ENCODE measurements at regions of chr2 and their contacts with region 1.

Region 1: GRCh38 chr2:231612179-231613053 is 19.8 kb downstream of the TEX44 start:
- DNase-seq: peak; percentile 93 to 97 (median 96)
- ATAC-seq: peak; percentile 71 to 74
- H3K4me3 ChIP-seq: no peak overlapping the region
- H3K27ac ChIP-seq: peak overlapping the region; percentile 99
- H3K4me1 ChIP-seq: peaks cover 4% of the 10 kb centered on the region
- H3K27me3 ChIP-seq: no peaks in the 10 kb centered on the region

Region 2: GRCh38 chr2:231514103-231514950 is 98.1 kb before region 1 on chr2:
- intact Hi-C with region 1: no loop called
- DNase-seq: peak; percentile 98 to 100 (median 99)
- ATAC-seq: peak; percentile 100
- H3K4me3 ChIP-seq: peak overlapping the region; percentile 49
- H3K27ac ChIP-seq: peak overlapping the region; percentile 82
- H3K4me1 ChIP-seq: no peaks in the 10 kb centered on the region
- H3K27me3 ChIP-seq: no peaks in the 10 kb centered on the region

Region 3: DNA sequence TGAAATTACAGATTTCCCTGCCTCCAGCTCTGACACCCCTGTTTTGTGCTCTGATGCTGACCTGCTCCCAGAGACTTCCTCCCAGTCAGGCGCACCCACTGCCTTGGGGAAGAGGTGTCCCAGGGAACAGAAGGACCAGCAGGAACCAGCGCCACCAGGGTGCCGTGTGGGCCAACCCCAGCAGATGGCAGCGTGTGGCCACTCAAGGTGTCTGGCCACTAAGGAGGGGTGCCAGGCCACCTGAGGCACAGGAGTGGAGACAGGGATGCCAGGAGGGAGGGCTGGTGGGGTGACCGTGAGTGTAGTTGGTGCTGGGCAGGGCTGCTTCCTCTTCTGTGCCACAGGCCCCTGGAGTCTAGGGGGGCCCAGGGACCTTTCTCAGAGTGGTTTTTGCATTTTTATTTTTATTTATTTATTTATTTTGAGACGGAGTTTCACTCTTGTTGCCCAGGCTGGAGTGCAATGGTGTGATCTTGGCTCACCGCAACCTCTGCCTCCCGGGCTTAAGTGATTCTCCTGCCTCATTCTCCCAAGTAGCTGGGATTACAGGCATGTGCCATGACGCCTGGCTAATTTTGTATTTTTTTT is 36.3 kb after region 1 on chr2:
- intact Hi-C with region 1: loop called in 1 of 4 experiments (anchors 5 kb)
- DNase-seq: peak; percentile 61 to 83 (median 83)
- ATAC-seq: peak; percentile 75 to 79
- H3K4me3 ChIP-seq: no peak overlapping the region
- H3K27ac ChIP-seq: no peak overlapping the region
- H3K4me1 ChIP-seq: peaks cover 5% of the 10 kb centered on the region
- H3K27me3 ChIP-seq: no peaks in the 10 kb centered on the region

Region 4: DNA sequence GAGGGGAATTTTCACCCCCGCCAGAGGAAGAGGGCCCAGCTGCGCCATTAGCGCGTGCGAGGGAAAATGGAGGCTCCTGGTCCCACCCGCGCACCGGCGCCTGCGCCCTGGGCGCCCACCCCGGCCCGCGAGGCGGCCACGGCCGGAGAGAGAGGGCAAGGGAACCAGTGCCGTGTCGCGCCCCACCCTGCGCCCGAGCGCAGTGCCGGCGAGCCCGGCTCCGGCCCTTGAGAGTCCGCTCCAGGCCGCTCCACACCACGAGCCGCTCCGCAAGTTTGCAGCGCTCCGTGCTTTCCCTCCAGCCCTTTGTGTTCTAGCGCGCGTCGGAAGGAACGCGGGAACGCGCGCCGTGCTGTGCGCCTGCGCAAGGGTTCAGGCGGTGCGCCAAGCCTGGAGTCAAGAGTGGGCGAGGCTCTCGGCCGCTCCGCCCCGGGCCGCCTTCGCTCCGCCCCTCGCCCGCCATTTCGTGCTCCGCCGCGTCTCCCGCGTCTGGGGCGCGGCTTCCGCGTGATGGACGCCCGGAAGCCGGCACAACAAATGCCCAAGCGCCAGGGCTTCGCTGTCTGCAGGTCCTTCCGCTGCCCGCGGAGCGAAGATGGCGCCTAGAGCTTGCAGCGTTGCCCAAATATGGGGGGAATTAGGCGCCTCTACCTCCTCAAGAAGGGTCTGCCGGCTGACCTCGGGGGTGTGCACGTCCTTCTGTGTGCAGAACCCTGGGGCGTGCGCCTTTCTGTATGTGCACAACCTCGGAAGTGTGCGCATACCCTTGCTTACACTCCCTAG is 49.8 kb after region 1 on chr2:
- intact Hi-C with region 1: loop called in 1 of 4 experiments (anchors 2 kb)
- DNase-seq: peak; percentile 96 to 99 (median 98)
- ATAC-seq: peak; percentile 82
- H3K4me3 ChIP-seq: peak overlapping the region; percentile 26
- H3K27ac ChIP-seq: peak overlapping the region; percentile 77
- H3K4me1 ChIP-seq: peaks cover 5% of the 10 kb centered on the region
- H3K27me3 ChIP-seq: no peaks in the 10 kb centered on the region

Region 5: DNA sequence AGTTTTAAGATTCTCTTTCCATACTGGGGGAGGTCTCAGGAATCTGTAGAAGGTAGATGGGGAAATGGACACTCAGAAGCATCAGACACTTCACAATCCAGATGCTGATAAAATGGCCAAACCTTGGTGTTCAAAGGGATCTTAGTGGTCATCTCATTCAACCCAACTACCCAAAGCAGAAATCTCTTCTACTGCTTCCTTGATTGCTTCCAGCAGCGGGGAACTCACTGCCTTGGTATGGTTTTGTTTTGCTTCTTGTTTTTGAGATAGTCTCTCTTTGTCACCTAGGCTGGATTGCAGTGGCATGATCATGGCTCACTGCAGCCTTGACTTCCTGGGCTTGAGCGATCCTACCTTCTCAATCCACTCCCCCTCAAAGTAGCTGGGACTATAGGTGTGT is 56.6 kb after region 1 on chr2:
- intact Hi-C with region 1: loop called (anchors 1 to 5 kb)
- DNase-seq: no peak
- ATAC-seq: no peak
- H3K4me3 ChIP-seq: no peak overlapping the region
- H3K27ac ChIP-seq: no peak overlapping the region
- H3K4me1 ChIP-seq: peaks cover 5% of the 10 kb centered on the region
- H3K27me3 ChIP-seq: no peaks in the 10 kb centered on the region

Region 6: DNA sequence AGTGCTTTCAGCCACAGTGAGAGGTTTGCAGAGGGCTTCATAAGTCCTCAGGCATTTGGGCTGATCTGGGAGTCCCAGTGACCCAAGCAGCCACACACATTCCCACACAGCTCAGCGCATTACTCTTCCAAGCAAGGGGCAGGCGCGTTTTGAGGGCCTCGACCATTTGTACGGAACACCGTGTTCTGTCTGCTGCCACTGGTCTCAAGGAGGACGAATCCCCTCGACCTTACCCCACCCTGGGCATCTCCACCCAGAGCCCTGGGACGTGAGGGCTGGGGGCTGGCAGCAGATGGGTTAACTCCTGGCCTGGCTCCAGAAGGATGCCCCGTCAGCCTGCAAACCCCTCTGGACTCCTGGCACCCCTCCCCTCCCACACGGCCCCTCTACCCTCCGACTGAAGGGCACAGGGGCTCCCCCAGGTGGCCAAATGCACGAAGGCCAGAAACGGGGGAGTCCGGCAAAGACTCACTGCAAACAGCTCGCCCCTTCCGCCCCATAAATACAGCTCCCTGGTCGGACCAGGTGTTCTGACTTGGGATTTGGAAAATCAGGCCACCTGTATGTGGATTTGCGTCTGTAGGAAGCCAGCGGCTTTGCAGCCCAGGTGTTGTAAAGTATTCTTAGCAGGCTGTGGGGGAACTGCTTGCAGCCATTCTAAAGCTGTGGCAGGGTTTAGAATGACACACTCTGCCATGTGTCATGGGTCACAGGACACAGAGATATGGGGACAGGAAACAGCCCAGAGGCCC is 62.3 kb after region 1 on chr2:
- intact Hi-C with region 1: loop called in 3 of 4 experiments (anchors 1 to 5 kb)
- DNase-seq: peak; percentile 72 to 91 (median 87)
- ATAC-seq: peak; percentile 45 to 53
- H3K4me3 ChIP-seq: no peak overlapping the region
- H3K27ac ChIP-seq: peak overlapping the region; percentile 32
- H3K4me1 ChIP-seq: no peaks in the 10 kb centered on the region
- H3K27me3 ChIP-seq: no peaks in the 10 kb centered on the region

Region 7: DNA sequence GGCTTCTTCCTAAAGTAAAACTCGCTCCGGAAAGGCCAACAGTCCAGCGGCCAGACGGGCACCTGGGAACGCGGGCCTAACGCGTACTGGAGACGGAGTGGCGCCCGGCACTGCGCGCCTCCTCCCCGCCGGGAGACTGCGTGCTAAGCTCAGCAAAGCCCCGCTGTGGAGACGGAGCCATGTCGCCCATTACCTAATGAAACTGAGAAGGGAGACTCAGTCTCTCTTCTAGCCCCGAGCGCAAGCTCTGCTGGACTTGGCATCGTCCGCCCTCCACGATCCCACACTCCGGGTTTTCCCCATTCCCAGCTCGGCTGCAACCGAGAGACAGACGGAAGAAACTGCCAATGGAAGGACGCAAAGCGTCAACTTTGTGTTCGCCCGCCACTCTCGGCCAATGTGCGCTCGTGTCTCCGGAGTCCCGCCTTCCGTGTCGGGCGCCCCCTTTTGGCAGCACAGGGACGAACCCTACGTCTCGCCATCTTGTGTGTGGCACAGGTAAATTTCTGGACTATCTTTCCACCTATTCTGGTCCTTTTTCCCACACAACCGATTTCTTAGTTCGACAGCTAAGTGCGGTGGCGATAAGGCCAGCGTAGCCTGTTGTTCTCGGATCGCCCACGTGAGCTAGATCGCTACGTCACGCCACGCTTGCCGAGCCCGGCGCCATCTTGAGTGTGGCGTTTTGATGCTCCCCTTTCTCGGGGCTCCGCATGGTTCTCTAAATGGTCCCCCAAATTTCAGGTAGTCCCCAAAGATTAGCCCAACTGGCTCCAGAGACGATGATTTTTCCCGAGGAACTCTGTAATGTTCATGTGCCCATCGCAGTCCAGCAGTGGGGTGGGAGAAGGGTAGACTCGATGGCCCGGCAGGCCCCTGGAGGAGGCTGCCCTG is 94.6 kb after region 1 on chr2:
- intact Hi-C with region 1: loop called in 2 of 4 experiments (anchors 2 to 5 kb)
- DNase-seq: peak; percentile 98 to 99 (median 99)
- ATAC-seq: peak; percentile 72 to 74
- H3K4me3 ChIP-seq: peak overlapping the region; percentile 81
- H3K27ac ChIP-seq: peak overlapping the region; percentile 99
- H3K4me1 ChIP-seq: peaks cover 8% of the 10 kb centered on the region
- H3K27me3 ChIP-seq: no peaks in the 10 kb centered on the region

Region 8: GRCh38 chr2:231713730-231714430 is 101.5 kb after region 1 on chr2:
- intact Hi-C with region 1: loop called in 3 of 4 experiments (anchors 2 to 5 kb)
- DNase-seq: peak; percentile 90 to 96 (median 96)
- ATAC-seq: peak; percentile 44 to 47
- H3K4me3 ChIP-seq: no peak overlapping the region
- H3K27ac ChIP-seq: peak overlapping the region; percentile 55
- H3K4me1 ChIP-seq: peaks cover 10% of the 10 kb centered on the region
- H3K27me3 ChIP-seq: no peaks in the 10 kb centered on the region

Region 9: GRCh38 chr2:231745303-231746038 is 133.1 kb after region 1 on chr2:
- intact Hi-C with region 1: no loop called
- DNase-seq: no peak
- ATAC-seq: no peak
- H3K4me3 ChIP-seq: no peak overlapping the region
- H3K27ac ChIP-seq: no peak overlapping the region
- H3K4me1 ChIP-seq: no peaks in the 10 kb centered on the region
- H3K27me3 ChIP-seq: no peaks in the 10 kb centered on the region